Heart right ventricle (tissue), 16 donors: ENCODE measurements at regions of chr1 and their contacts with region 1.

Region 1: GRCh38 chr1:94599095-94599813 is 57.7 kb upstream of the F3 start:
- DNase-seq: peak in 1 of 2 donors; percentile 34
- ATAC-seq: peak; percentile 68 to 90 (median 82)
- H3K4me3 ChIP-seq: no peak overlapping the region
- H3K27ac ChIP-seq: no peak overlapping the region
- H3K4me1 ChIP-seq: peaks cover 0 to 15% (median 0%) of the 10 kb centered on the region in 9 donors
- H3K27me3 ChIP-seq: peaks cover 0 to 20% (median 0%) of the 10 kb centered on the region in 7 donors
- CTCF ChIP-seq: peak; percentile 11 to 67 (median 59)

Region 2: DNA sequence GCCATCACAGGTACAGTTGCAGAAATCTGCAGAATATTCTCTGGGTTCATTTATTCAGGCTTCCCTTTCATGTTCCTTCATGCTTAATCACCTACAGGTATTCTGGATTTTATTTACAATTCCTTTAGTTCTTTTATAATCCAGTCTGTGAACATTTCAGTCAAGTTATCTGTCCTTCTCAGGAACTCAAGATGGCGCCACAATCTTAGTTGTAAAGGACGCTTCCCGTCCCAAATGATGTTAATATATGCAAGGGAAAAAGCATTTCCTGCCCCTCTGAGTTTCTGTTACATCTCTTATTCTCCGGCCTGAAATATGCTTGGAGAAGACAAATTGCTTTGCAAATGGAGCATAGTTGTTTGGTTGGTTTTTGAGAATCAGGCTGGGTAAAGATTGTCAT is 77.0 kb before region 1 on chr1:
- intact Hi-C with region 1: loop called in 3 of 10 experiments (anchors 5 to 10 kb)
- DNase-seq: peak in 1 of 2 donors; percentile 35
- ATAC-seq: peak in 6 of 8 donors; percentile 43 to 72 (median 62)
- H3K4me3 ChIP-seq: no peak overlapping the region
- H3K27ac ChIP-seq: no peak overlapping the region
- H3K4me1 ChIP-seq: peaks cover 0 to under 1% (median 0%) of the 10 kb centered on the region in 9 donors
- H3K27me3 ChIP-seq: no peaks in the 10 kb centered on the region
- CTCF ChIP-seq: peak in 7 of 9 donors; percentile 40 to 73 (median 62)

Region 3: GRCh38 chr1:94541175-94542087 is 57.8 kb before region 1 on chr1 and contains the start of gene F3:
- intact Hi-C with region 1: loop called in 6 of 10 experiments (anchors 5 kb)
- DNase-seq: peak; percentile 89
- ATAC-seq: peak; percentile 92 to 96 (median 94)
- H3K4me3 ChIP-seq: peak within 1 kb of the TSS; percentile 45 to 80 (median 72)
- H3K27ac ChIP-seq: peak within 1 kb of the TSS; percentile 87 to 95 (median 90)
- H3K4me1 ChIP-seq: peaks cover 0 to 50% (median 32%) of the 10 kb centered on the region in 9 donors
- H3K27me3 ChIP-seq: peaks cover 0 to 12% (median 0%) of the 10 kb centered on the region in 7 donors
- CTCF ChIP-seq: peak in 2 of 9 donors; percentile 29 to 34
- total RNA-seq, gene F3: 20.4 to 99.0 (median 48.5) TPM

Region 4: GRCh38 chr1:94713472-94714141 is 114.4 kb after region 1 on chr1:
- intact Hi-C with region 1: no loop called
- DNase-seq: peak; percentile 62 to 71
- ATAC-seq: peak; percentile 80 to 96 (median 87)
- H3K4me3 ChIP-seq: no peak overlapping the region
- H3K27ac ChIP-seq: peak overlapping the region in 1 of 10 donors; percentile 61
- H3K4me1 ChIP-seq: peaks cover 0 to 30% (median 0%) of the 10 kb centered on the region in 9 donors
- H3K27me3 ChIP-seq: no peaks in the 10 kb centered on the region
- CTCF ChIP-seq: no peak